Endothelial cell of umbilical vein (primary cell): ENCODE measurements at regions of chr1 and their contacts with region 1.

Region 1: DNA sequence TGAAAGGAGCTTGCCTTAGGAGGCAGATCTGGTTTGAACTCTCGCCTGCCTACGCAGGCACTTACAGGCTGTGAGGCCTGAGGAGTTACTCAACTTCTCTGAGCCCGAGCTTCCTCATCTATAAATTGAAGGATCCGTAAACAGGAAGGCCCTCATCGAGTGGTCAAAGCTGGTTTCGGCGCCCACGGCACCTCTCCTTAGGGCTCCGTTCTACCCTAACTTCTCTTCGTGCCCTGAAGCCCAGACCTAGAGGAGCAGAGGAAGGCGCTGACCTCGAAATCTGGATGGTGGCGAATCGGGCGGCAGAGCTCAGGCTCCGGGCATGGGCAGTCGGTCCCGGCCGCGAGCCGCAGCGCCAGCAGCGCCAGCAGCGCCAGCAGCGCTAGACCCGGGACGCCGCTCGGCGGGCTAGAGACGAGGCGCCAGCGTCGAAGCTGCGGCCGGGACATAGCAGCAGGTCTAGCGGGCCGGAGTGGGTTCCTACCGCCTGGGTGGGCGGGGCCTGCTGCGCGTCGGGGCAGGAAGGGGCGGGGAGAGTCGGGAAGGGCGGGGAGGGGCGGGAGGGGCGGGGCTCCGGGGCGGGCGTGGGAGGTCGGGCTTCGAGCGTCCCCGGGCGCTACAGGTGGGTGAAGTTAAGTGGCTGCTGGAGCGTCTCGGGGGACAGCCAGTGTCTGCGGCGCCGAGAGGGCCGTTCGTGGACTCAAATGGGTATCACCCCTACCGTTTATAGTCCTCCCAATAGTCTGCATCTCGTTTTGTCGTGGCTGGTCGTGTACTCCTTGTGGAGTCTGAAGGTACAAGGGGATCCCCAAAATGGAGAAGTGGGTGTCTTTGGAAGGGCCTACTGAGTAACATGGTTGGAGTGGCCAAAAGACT is at the start of gene CTBS:
- DNase-seq: peak; percentile 85
- H3K4me3 ChIP-seq: peak within 1 kb of the TSS; percentile 40 to 69 (median 62)
- H3K27ac ChIP-seq: peak within 1 kb of the TSS; percentile 98
- H3K4me1 ChIP-seq: peaks cover 17% of the 10 kb centered on the region
- H3K27me3 ChIP-seq: no peaks in the 10 kb centered on the region
- CTCF ChIP-seq: no peak
- POLR2A ChIP-seq: peak; percentile 86
- total RNA-seq, gene CTBS: 10.7 and 14.3 TPM in 2 replicates

Region 2: DNA sequence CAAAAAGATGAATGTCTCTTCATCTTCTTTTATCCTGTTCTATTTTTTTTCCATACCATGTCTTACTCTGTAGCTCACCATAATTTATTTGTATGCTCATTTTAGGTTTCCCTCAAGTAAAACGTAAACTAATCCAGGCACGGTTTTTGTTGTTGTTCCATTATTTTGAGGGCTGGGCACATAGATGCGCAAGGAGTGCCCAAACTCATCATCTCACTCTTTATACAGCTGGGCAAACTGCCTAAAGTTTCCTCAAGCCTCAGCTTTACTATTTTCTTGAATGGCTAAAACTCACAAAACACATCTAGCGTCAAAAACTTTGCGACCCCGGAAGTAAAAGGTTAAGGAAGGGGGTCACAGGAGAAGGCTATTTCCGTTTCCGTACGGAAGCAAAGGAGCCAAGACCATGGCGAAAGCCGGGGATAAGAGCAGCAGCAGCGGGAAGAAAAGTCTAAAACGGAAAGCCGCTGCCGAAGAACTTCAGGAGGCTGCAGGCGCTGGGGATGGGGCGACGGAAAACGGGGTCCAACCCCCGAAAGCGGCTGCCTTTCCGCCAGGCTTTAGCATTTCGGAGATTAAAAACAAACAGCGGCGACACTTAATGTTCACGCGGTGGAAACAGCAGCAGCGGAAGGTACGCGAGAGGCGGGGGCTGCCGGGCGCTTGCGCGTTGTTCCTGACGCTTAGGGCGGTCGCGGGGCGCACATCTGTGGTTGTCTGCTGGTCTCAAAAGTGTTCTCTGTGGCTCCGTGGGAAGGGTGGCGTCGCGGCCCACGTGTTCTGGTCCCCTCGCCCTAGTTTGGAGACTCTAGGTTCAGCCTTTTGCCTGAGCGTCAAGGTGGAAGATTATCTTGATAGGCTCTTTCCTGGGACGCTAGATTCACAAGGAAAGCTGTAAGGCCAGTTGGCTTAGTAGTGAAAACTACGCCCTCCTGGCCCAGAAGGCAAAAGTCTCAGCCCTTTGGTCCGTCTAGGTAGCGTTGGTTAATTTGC is 95.0 kb before region 1 on chr1 and contains the start of gene RPF1:
- CTCF ChIA-PET with region 1: no interaction called
- POLR2A ChIA-PET with region 1: no interaction called
- dilution Hi-C with region 1: no loop called
- intact Hi-C with region 1: loop called (anchors 1 kb)
- DNase-seq: peak; percentile 85
- H3K4me3 ChIP-seq: peak within 1 kb of the TSS; percentile 59 to 95 (median 64)
- H3K27ac ChIP-seq: peak within 1 kb of the TSS; percentile 66
- H3K4me1 ChIP-seq: peaks cover 17% of the 10 kb centered on the region
- H3K27me3 ChIP-seq: no peaks in the 10 kb centered on the region
- CTCF ChIP-seq: no peak
- POLR2A ChIP-seq: peak; percentile 68
- total RNA-seq, gene RPF1: 32.6 and 34.3 TPM in 2 replicates

Region 3: DNA sequence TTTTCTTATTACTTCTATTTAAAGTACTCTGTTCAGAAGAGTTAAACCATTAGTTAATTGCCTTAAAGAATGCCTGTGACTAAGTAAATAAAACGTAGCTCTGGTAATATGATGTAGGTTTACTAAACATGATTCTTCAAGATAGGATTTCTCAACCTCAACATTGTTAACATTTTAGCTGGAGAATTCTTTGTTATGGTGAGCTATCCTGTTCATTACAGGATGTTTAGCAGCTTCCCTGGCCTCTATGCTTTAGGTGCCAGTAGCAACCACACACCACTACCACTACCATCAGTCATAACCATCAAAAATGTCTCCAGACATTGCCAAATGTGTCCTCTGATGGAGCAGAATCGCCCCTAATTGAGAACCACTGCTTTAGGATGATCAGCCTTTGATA is 84.4 kb before region 1 on chr1:
- CTCF ChIA-PET with region 1: no interaction called
- POLR2A ChIA-PET with region 1: no interaction called
- dilution Hi-C with region 1: no loop called
- intact Hi-C with region 1: no loop called
- DNase-seq: no peak
- H3K4me3 ChIP-seq: no peak overlapping the region
- H3K27ac ChIP-seq: no peak overlapping the region
- H3K4me1 ChIP-seq: no peaks in the 10 kb centered on the region
- H3K27me3 ChIP-seq: no peaks in the 10 kb centered on the region
- CTCF ChIP-seq: no peak
- POLR2A ChIP-seq: no peak

Region 4: DNA sequence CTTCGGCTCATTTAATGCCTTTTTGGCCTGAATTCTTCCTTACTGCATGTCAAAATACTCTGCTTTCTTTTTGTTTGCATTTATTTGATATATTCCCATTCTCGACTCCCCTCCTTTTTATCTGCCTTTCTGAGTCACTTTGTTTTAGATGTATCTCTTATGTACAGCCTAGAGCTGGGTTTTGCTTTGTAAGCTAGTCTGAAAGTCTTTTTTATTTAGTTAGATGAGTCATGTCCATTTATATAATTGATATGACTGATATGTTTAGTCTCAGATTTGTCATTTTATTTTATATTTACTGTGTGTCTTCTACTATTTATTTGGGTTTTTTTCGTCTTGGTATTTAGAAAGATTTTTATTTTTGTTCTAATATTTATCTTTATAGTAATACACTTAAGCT is 34.2 kb before region 1 on chr1:
- CTCF ChIA-PET with region 1: no interaction called
- POLR2A ChIA-PET with region 1: no interaction called
- dilution Hi-C with region 1: no loop called
- intact Hi-C with region 1: no loop called
- DNase-seq: no peak
- H3K4me3 ChIP-seq: no peak overlapping the region
- H3K27ac ChIP-seq: no peak overlapping the region
- H3K4me1 ChIP-seq: no peaks in the 10 kb centered on the region
- H3K27me3 ChIP-seq: no peaks in the 10 kb centered on the region
- CTCF ChIP-seq: no peak
- POLR2A ChIP-seq: no peak